CD8-positive, alpha-beta T cell (primary cell): ENCODE measurements at regions of chr1 and their contacts with region 1.

Region 1: DNA sequence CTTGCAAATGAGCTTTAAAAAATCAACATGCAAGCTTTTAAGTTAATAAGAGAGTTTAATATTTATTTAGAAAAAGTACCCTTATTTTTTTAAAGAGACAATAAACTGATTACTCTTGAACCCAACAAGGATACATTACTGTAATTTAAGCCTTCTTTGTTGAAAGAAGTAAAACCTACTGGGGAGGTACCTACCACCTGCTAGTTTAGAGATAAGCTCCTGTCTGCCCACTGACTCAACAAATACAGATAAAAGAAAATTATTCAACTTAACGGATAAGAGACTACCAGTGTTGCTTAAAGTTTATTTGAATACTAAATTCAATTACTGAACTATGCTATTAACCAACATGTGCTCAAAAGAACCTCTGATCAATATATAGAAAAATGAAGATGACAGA is 23.1 kb downstream of the USP24 start:
- DNase-seq: no peak
- ATAC-seq: no peak
- H3K4me3 ChIP-seq: no peak overlapping the region
- H3K4me3 Mint-ChIP-seq: no peak overlapping the region
- H3K27ac ChIP-seq: no peak overlapping the region
- H3K27ac Mint-ChIP-seq: no peak overlapping the region
- H3K4me1 ChIP-seq: peaks cover 28% of the 10 kb centered on the region
- H3K4me1 Mint-ChIP-seq: peaks cover 73% of the 10 kb centered on the region
- H3K27me3 ChIP-seq: no peaks in the 10 kb centered on the region
- H3K27me3 Mint-ChIP-seq: no peaks in the 10 kb centered on the region
- CTCF ChIP-seq: no peak

Region 2: DNA sequence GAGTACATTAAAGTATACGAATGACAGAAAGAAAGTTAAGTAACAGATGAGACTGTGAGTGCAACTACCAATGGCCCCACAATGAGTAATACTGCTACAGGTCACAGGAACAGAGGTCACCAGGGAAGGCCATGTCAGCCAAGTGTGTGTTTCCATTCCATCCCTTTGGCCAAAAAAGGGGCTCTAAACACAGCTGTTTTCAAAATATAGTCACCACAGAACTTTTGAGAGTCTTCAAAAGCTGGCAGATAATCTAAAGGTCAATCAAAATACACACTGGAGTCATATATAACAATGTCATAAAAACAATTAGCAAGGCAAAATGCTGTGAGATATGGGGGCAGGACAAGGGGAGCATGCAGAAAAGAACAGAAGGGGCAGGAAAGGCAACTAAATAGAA is 12.9 kb after region 1 on chr1:
- CTCF ChIA-PET with region 1: no interaction called
- POLR2A ChIA-PET with region 1: interaction called, 4 read pairs
- intact Hi-C with region 1: loop called in 1 of 2 experiments (anchors 1 kb)
- DNase-seq: no peak
- ATAC-seq: no peak
- H3K4me3 ChIP-seq: no peak overlapping the region
- H3K4me3 Mint-ChIP-seq: no peak overlapping the region
- H3K27ac ChIP-seq: no peak overlapping the region
- H3K27ac Mint-ChIP-seq: peak overlapping the region; percentile 34
- H3K4me1 ChIP-seq: peaks cover 58% of the 10 kb centered on the region
- H3K4me1 Mint-ChIP-seq: peaks cover 83% of the 10 kb centered on the region
- H3K27me3 ChIP-seq: no peaks in the 10 kb centered on the region
- H3K27me3 Mint-ChIP-seq: no peaks in the 10 kb centered on the region
- CTCF ChIP-seq: no peak

Region 3: DNA sequence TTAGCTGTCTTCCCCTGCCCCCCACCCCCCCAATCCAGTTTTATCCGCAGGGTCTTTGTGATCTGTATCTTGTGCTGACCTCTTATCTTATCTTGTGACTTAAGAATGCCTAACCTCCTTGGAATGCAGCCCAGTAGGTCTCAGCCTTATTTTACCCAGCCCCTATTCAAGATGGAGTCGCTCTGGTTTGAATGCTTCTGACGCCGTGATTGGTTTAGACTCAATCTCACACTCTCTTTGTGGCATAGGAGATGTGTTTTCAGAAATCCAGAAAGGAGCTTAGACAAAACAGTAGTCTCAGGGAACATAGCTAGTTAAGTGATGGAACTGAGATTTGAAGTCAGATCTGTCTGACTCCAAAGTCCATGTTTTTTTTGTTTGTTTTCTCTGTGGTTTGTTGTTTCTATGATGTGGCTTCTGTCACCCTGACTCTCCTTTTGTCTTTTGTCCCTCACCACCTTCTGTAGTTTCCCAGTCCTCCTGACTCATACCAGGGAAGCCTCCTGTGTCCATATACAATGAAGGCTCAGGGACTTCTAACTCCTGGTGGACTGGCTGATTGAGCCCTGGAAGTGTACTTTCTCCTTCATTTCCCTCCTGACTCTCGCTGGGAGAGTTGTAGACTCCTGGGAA is 41.2 kb after region 1 on chr1:
- CTCF ChIA-PET with region 1: no interaction called
- POLR2A ChIA-PET with region 1: no interaction called
- intact Hi-C with region 1: no loop called
- DNase-seq: no peak
- ATAC-seq: no peak
- H3K4me3 ChIP-seq: no peak overlapping the region
- H3K4me3 Mint-ChIP-seq: no peak overlapping the region
- H3K27ac ChIP-seq: no peak overlapping the region
- H3K27ac Mint-ChIP-seq: no peak overlapping the region
- H3K4me1 ChIP-seq: no peaks in the 10 kb centered on the region
- H3K4me1 Mint-ChIP-seq: no peaks in the 10 kb centered on the region
- H3K27me3 ChIP-seq: no peaks in the 10 kb centered on the region
- H3K27me3 Mint-ChIP-seq: no peaks in the 10 kb centered on the region
- CTCF ChIP-seq: no peak